ENCODE measurements at regions of chr19 and their contacts with region 1.

Region 1: DNA sequence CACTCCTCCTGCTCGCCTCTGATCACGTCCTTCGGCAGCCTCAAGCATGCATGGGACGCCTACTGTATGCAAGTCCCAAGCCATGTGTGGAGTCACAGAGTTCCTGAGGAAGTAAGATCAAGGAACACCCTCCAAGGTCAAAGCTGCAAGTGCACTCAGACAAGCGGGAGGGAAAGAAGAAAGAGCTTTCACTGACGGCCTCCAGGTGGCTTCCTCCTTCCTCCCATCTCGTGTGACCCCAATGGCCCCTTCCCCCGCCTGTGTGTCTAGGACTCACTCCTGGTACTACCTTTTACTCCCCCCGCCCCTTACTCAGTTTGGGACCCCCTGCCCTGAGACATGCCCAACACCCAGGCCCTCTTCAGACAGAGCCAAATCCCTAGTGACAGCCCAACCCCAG is 6.0 kb downstream of the HAUS8 start:
- DNase-seq: no peak
- ATAC-seq: no peak
- H3K4me3 ChIP-seq: no peak overlapping the region
- H3K27ac ChIP-seq: no peak overlapping the region
- H3K4me1 ChIP-seq: peaks cover 4 to 6% of the 10 kb centered on the region in 2 donors
- H3K27me3 ChIP-seq: no peaks in the 10 kb centered on the region
- CTCF ChIP-seq: no peak
- POLR2A ChIP-seq: no peak

Region 2: GRCh38 chr19:17135001-17135853 is 66.0 kb after region 1 on chr19:
- in situ Hi-C with region 1: loop called in 1 of 4 experiments (anchors 5 kb)
- intact Hi-C with region 1: loop called (anchors 2 kb)
- DNase-seq: peak; percentile 76 to 85
- ATAC-seq: peak; percentile 90 to 96
- H3K4me3 ChIP-seq: peak overlapping the region; percentile 12 to 47 (median 34)
- H3K27ac ChIP-seq: peak overlapping the region; percentile 75 to 82 (median 82)
- H3K4me1 ChIP-seq: peaks cover 33 to 34% of the 10 kb centered on the region in 2 donors
- H3K27me3 ChIP-seq: no peaks in the 10 kb centered on the region
- CTCF ChIP-seq: peak in 4 of 5 experiments; percentile 21 to 48 (median 34)
- POLR2A ChIP-seq: peak in 1 of 2 donors; percentile 37

Region 3: DNA sequence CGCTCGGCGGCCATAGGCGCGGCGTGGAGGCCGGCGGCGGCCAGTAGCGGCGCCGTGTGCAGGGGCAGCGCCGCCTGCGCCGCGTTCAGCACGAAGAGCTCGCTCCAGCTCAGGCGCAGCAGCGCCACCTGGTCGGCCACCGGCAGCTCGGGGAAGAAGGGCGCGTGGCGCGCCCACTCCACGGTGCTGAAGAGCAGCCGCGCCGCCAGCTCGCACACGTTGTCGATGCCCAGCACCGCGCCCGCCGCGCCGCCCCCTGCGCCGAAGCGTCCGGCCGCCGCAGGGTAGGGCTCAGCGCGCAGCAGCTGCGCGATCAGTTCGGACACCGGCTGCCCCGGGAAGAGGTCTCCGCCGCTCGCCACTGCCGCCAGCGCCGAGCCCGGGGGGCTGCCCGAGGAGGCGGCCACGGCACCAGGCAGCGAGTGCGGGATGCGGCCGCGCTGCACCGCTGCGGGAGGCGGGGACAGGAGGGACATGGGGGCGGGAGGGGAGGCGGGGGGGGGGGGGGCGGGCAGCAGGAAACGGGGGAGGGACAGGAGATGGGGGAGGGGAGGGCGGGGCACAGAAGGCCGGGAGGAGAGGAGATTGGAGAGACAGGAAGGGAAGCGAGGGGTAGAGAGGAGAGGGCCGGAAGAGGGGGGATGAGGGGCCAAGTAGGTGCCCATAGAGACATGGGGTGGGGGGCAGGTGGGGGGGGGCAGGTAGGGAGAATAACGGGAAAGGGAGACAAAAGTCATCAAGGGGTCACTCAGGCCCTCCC is 166.6 kb after region 1 on chr19:
- in situ Hi-C with region 1: no loop called
- intact Hi-C with region 1: loop called (anchors 5 kb)
- DNase-seq: peak in 1 of 2 donors; percentile 62
- ATAC-seq: peak; percentile 84 to 86
- H3K4me3 ChIP-seq: peak overlapping the region; percentile 45 to 65 (median 50)
- H3K27ac ChIP-seq: peak overlapping the region; percentile 50 to 78 (median 70)
- H3K4me1 ChIP-seq: peaks cover 9 to 18% of the 10 kb centered on the region in 2 donors
- H3K27me3 ChIP-seq: no peaks in the 10 kb centered on the region
- CTCF ChIP-seq: peak in 4 of 5 experiments; percentile 27 to 67 (median 52)
- POLR2A ChIP-seq: no peak

Region 4: GRCh38 chr19:17275461-17276175 is 206.4 kb after region 1 on chr19:
- in situ Hi-C with region 1: loop called in 3 of 4 experiments (anchors 5 kb)
- intact Hi-C with region 1: no loop called
- DNase-seq: no peak
- ATAC-seq: no peak
- H3K4me3 ChIP-seq: no peak overlapping the region
- H3K27ac ChIP-seq: no peak overlapping the region
- H3K4me1 ChIP-seq: no peaks in the 10 kb centered on the region
- H3K27me3 ChIP-seq: no peaks in the 10 kb centered on the region
- CTCF ChIP-seq: no peak
- POLR2A ChIP-seq: no peak

Region 5: GRCh38 chr19:17282488-17283255 is 213.5 kb after region 1 on chr19:
- in situ Hi-C with region 1: loop called (anchors 5 kb)
- intact Hi-C with region 1: loop called (anchors 1 kb)
- DNase-seq: peak; percentile 61 to 74
- ATAC-seq: peak; percentile 85 to 89
- H3K4me3 ChIP-seq: peak overlapping the region; percentile 22 to 52 (median 44)
- H3K27ac ChIP-seq: no peak overlapping the region
- H3K4me1 ChIP-seq: peaks cover 4 to 11% of the 10 kb centered on the region in 2 donors
- H3K27me3 ChIP-seq: peaks cover 16% of the 10 kb centered on the region in 3 donors
- CTCF ChIP-seq: peak; percentile 79 to 96 (median 94)
- POLR2A ChIP-seq: no peak

Measured in gastrocnemius medialis (tissue), 4 donors.